Breast epithelium (tissue), 4 donors: ENCODE measurements at regions of chr1 and their contacts with region 1.

Region 1: DNA sequence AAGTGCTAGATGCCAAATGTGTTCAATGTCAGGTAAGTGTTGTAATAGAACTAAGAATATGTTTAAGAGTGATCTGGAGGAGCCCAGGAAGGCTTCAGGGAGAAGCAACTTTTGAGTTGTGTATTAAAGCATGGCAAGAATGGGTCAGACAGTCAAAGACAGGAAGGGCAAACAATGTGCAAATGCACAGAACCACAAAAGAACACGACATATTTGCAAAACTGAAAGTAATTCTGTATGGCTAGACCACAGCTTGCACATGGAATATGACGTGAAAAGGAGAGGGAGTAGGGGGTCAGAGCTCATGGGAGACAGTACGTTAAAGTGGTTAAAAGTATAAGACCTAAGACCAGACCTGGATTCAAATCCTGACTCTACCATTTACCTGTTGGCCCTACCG is 7.1 kb upstream of the SORT1 start:
- DNase-seq: no peak
- H3K4me3 ChIP-seq: no peak overlapping the region
- H3K27ac ChIP-seq: no peak overlapping the region
- H3K4me1 ChIP-seq: no peaks in the 10 kb centered on the region
- H3K27me3 ChIP-seq: no peaks in the 10 kb centered on the region
- CTCF ChIP-seq: no peak
- POLR2A ChIP-seq: no peak

Region 2: DNA sequence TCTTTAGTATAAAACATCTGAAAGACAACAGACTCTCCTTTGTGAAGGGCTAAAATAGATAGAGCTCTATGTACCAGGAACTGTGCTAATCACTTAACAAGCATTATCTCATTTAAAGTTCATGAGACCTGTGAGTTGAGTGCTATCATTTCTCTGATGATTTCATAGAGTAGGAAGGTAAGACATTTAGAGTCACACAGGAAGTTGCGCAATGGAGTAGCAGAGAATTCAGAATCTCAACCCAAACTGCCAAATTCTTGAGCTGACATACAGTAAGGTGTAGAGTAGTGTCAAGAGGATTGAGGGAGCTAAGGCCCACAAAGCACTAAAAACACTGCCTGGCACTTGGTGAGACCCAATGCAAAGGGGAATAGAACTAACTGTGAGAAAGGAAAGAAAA is 1879.7 kb before region 1 on chr1:
- intact Hi-C with region 1: no loop called
- DNase-seq: no peak
- H3K4me3 ChIP-seq: no peak overlapping the region
- H3K27ac ChIP-seq: no peak overlapping the region
- H3K4me1 ChIP-seq: no peaks in the 10 kb centered on the region
- H3K27me3 ChIP-seq: no peaks in the 10 kb centered on the region
- CTCF ChIP-seq: no peak
- POLR2A ChIP-seq: no peak

Region 3: GRCh38 chr1:108816049-108816893 is 588.6 kb before region 1 on chr1:
- intact Hi-C with region 1: loop called (anchors 10 kb)
- DNase-seq: peak; percentile 65 to 78
- H3K4me3 ChIP-seq: peak overlapping the region; percentile 27 to 51 (median 41)
- H3K27ac ChIP-seq: peak overlapping the region; percentile 89 to 93
- H3K4me1 ChIP-seq: no peaks in the 10 kb centered on the region
- H3K27me3 ChIP-seq: no peaks in the 10 kb centered on the region
- CTCF ChIP-seq: no peak
- POLR2A ChIP-seq: no peak

Region 4: DNA sequence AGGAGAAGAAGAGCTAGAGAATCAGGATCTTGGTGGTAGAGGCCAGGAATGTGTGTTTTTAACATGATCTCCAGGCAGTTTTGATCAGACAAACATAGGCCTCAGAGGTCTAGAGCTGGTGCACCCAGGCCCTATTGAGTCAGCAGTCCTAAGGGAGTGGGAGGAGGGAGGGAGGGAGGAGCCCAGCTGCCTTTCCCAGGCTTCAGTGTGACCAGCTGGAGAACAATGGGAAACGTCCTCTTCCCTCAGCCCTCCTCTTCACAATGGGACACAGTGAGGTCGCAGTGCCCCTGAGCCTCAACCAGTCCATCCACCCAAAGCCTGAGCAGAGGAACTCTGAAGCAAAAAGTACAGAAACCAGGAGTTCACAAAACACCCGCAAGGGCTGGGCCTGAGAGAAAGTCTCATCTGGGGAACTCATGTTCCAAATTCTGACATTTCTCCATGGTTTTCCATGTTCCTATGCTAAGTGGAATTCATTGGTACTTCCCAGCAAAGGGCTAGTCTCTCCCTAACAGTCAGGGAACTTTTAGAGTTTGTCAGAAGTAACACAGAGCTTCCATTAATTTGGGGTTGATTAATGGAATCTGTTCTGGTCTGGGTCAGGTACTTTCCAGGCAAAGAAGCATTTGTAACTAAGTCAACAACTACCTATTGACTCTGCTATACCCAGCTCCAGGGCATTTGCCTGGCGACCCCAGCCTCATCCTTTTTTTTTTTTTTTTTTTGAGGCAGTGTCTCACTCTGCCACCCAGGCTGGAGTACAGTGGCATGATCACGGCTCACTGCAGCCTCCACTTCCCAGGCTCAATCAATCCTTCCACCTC is 253.5 kb before region 1 on chr1:
- intact Hi-C with region 1: no loop called
- DNase-seq: peak in 1 of 2 donors; percentile 27
- H3K4me3 ChIP-seq: no peak overlapping the region
- H3K27ac ChIP-seq: peak overlapping the region; percentile 79 to 81
- H3K4me1 ChIP-seq: peaks cover 0 to 11% of the 10 kb centered on the region in 2 donors
- H3K27me3 ChIP-seq: no peaks in the 10 kb centered on the region
- CTCF ChIP-seq: no peak
- POLR2A ChIP-seq: no peak

Region 5: DNA sequence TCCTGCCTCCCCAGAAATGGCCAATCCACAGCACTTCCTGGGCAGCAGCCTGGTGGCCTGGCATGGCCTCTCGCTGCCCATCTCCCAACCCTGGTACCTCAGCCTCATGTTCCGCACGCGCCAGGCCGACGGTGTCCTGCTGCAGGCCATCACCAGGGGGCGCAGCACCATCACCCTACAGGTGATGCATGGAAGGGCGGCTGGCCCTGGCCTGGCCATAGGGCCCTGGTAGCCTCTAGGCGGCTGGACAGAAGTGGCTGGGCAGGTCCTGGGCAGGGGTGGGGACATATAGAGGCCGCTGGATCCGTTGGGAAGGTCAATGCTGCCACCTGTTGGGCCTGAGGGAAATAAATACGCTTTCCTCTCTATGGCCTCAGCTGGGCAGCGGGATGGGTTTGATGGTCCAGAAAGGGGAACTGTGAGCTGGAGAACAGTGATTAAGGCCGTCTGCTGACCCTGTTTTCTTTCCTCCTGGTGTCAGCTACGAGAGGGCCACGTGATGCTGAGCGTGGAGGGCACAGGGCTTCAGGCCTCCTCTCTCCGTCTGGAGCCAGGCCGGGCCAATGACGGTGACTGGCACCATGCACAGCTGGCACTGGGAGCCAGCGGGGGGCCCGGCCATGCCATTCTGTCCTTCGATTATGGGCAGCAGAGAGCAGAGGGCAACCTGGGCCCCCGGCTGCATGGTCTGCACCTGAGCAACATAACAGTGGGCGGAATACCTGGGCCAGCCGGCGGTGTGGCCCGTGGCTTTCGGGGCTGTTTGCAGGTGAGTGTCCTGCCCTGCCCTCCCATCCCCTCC is 141.0 kb before region 1 on chr1:
- intact Hi-C with region 1: loop called (anchors 10 kb)
- DNase-seq: peak; percentile 90 to 95
- H3K4me3 ChIP-seq: no peak overlapping the region
- H3K27ac ChIP-seq: peak overlapping the region; percentile 77 to 83
- H3K4me1 ChIP-seq: no peaks in the 10 kb centered on the region
- H3K27me3 ChIP-seq: no peaks in the 10 kb centered on the region
- CTCF ChIP-seq: peak; percentile 100
- POLR2A ChIP-seq: no peak

Region 6: DNA sequence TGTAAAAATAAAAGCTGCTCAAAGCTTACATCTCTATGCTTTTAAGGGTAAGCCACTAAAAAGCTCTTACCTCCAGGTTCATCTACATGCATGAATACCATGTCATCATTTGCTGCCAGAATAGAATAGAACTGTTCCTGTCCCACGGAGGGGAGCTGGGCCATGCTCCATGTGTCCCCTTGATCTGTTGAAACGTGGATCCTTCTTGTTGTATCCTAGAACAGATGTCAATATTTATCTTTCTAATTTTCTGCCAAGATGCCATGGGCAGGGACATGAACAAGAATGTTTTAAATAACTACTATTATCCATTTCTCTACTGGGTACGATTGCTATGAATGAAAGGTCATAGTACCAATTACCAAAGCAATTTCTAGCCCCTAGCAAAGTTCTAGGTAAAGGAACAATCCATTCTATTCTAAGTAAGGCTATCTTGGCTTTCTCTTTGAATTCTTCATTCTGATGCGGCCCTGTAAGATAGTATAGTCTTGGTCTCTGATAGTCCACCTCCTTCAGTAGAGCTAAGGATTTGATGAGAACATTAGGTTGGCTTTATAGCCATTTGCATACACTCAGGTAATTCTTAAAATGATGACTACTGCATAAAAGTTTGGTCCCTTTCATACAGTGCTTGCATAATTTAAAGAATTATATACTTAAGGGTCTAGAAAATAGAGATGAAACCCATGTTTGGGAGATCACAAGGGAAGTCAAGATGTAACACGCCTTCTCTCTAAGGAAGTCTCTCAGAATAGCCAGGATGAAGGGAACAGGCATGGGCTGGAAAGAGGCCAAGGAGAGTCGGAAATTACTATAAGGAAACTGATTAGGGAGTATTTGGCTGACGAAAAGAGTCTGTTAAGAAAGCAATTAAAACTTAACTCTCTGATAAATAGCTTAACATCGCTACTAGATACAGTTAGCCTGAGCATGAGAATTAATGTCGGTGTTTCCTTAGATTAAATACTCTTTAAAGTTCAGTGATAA is 62.6 kb before region 1 on chr1:
- intact Hi-C with region 1: no loop called
- DNase-seq: no peak
- H3K4me3 ChIP-seq: no peak overlapping the region
- H3K27ac ChIP-seq: no peak overlapping the region
- H3K4me1 ChIP-seq: no peaks in the 10 kb centered on the region
- H3K27me3 ChIP-seq: no peaks in the 10 kb centered on the region
- CTCF ChIP-seq: no peak
- POLR2A ChIP-seq: no peak

Region 7: DNA sequence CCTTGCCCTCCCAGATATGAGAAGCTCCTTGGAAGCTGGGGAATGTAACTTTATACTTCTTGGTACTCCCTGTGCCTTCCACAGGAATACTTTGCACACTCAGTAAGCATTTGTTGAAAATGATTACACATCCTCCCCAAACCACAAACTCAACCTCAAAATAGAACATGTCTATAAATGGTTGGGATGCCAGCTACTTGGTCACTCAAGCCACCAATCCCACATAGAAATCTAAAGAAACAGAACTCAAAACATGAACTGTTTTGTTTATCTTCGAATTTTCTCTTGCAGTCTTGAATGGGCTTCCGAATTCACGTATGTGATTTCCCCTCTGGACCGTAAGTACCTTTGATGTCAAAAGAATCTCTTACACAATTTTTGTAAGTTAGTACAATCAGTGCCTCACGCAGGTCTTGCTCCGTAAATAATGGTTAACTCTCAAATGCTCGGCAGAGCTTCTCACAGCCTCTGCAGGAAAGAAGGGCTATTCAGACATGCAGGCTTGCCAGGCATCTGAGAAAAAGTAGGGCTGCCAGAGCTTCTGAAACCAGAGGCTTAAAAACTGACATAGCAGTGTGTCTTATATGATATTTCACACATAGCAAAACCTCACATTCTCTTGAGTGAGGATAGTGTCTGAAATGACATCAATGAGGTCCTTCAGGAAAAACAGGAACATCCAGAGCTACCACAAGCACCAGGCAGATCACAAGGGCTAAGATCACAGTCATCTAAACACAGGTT is 34.0 kb before region 1 on chr1:
- intact Hi-C with region 1: no loop called
- DNase-seq: no peak
- H3K4me3 ChIP-seq: peak overlapping the region in 1 of 3 donors; percentile 12
- H3K27ac ChIP-seq: peak overlapping the region; percentile 67 to 69
- H3K4me1 ChIP-seq: no peaks in the 10 kb centered on the region
- H3K27me3 ChIP-seq: no peaks in the 10 kb centered on the region
- CTCF ChIP-seq: no peak
- POLR2A ChIP-seq: no peak